HCT116 (cell line): ENCODE measurements at regions of chr16 and their contacts with region 1.

Region 1: DNA sequence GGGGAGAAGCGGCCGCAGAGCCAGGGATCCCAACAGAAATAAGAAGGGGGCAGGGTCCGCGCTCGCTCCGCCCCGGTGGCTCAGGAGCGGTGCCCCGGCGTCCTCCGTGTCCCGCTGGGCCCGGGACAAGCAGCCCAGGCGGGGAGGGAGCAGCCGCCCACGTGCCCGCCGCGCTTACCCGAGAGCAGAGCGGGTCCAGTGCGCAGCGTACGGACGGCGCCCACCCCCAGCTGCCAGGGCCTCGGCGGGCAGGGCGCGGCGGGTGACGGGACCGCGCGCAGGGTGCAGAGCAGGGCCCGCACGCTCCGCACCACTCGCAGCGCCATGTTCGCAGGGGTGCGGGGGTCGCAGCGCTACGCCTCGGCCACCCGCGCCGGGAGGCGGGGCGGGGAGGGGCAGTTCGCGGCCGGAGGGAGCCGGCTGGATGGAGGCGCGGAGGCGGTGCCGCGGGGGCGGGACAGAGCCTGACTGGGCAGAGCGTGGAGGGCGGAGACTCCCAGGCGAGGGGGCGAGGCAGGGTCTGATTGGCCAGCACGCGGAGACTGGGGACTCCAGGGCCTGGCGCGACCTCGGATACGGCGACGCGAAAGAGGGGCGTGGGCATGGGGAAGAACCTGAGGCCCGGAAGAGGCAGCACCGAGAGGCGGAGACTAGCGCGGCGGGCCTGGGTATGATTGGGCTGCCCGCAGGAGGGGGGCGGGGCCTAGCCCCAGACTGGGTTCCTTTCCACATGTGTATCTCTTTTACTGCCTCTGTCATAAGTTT is at the start of gene GCSH:
- DNase-seq: peak; percentile 99
- ATAC-seq: peak; percentile 98
- H3K4me3 ChIP-seq: peak within 1 kb of the TSS; percentile 89 to 95
- H3K27ac ChIP-seq: peak within 1 kb of the TSS; percentile 70
- H3K4me1 ChIP-seq: peaks cover 0 to 30% of the 10 kb centered on the region in 2 experiments; a peak in 3 of 4 replicates
- H3K27me3 ChIP-seq: no peaks in the 10 kb centered on the region
- CTCF ChIP-seq: no peak
- POLR2A ChIP-seq: peak; percentile 45
- RAD21 ChIP-seq: no peak
- total RNA-seq, gene GCSH: 117 TPM

Region 2: DNA sequence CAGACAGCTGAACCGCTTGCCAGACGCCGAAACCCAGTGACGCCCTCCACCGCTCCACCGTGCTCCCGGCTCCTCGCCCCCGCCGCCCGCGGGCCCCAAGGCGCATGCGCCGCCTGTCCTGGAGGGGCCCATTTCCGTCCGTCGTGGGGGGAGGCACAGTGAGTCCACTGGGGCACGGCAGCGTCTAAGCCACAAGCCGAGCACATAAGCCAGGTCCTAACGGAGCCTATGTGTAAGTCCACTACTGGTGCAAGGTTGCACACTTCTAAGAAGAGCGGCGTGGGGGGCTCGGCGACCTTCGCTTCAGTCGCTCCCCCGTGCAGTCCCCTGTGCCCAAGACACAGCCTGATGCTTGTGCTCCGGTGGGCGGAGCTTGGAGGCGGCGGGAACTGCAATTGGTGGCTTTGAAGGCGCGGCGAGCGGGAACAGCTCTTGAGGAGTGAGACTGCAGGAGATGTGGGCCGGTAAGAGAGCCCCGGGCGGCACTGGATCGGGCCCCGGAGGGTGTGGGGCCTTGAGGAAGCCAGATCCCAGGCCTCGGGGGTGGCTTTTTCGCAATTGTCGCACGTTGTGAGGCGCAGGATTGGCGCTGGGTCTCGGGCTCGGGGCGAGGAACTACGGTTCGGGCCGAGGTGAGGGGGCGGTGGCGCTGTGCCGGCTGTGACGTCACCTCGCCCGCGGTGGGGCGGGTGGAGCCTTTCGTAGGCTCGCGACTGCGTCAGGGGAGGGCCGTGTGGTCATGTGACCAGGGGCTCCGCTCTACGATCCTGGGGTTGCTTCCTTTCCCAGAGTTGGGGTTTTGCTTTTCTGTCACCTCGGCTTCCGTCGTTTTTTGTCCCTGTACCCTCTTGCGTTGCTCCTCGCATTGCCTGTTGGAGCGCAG is 89.1 kb before region 1 on chr16 and contains the starts of genes CENPN and CMC2:
- CTCF ChIA-PET with region 1: no interaction called
- POLR2A ChIA-PET with region 1: no interaction called
- RAD21 ChIA-PET with region 1: no interaction called
- intact Hi-C with region 1: loop called (anchors 1 kb)
- DNase-seq: peak; percentile 100
- ATAC-seq: peak; percentile 89
- H3K4me3 ChIP-seq: peak within 1 kb of the TSS; percentile 53 to 93
- H3K27ac ChIP-seq: peak within 1 kb of the TSS; percentile 97
- H3K4me1 ChIP-seq: peaks cover 16 to 26% of the 10 kb centered on the region in 2 experiments
- H3K27me3 ChIP-seq: no peaks in the 10 kb centered on the region
- CTCF ChIP-seq: no peak
- POLR2A ChIP-seq: peak; percentile 92
- RAD21 ChIP-seq: no peak
- total RNA-seq, gene CENPN: 76.7 TPM
- total RNA-seq, gene CMC2: 119 TPM

Region 3: DNA sequence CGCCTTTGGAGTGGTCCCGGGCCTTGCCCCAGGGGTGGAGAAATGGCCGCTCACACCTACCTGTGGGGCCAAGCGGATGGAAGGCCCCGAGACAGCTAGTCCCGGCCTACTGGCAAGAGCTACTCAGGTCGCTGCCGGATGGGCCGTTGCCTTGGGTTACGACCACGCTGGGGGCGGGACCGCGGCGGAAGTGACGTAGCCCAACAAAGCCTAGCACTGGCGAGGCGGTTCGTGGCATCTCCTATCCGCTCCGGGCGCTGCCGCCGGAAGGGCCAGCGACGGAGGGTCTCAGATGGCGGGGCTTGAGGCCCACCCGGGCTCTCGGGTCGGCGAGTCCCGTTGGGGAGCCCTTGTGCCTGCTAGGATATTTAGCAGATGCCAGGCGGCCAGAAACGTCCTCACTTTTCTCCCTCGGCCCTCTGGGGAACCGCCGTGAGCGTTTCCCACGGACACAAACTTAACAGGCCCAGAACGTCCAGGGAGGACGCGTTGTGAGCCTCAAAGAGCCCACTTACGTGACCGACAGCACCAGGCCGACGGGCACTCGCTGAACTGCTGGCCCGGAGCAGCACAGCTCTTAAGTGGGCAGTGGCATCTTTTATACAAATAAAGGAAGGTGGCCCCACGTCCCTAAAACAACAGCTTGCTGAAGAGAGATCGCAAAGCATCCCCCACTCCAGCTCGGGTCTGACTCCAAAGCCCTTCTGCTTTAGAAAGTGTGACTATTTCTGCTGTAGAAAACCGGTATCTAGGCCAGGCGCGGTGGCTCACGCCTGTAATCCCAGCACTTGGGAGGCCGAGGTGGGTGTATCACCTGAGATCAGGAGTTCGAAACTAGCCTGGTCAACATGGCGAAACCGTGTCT is 18.8 kb before region 1 on chr16 and contains the start of gene C16orf46:
- CTCF ChIA-PET with region 1: interaction called, 3 read pairs
- POLR2A ChIA-PET with region 1: no interaction called
- RAD21 ChIA-PET with region 1: no interaction called
- intact Hi-C with region 1: loop called (anchors 2 kb)
- DNase-seq: peak; percentile 96
- ATAC-seq: peak; percentile 92
- H3K4me3 ChIP-seq: peak within 1 kb of the TSS; percentile 66 to 74
- H3K27ac ChIP-seq: peak within 1 kb of the TSS; percentile 53
- H3K4me1 ChIP-seq: peaks cover 10 to 15% of the 10 kb centered on the region in 2 experiments
- H3K27me3 ChIP-seq: no peaks in the 10 kb centered on the region
- CTCF ChIP-seq: no peak
- POLR2A ChIP-seq: peak; percentile 80
- RAD21 ChIP-seq: no peak
- total RNA-seq, gene C16orf46: 1.7 TPM

Region 4: GRCh38 chr16:81204798-81205680 is 108.9 kb after region 1 on chr16:
- CTCF ChIA-PET with region 1: no interaction called
- POLR2A ChIA-PET with region 1: no interaction called
- RAD21 ChIA-PET with region 1: no interaction called
- intact Hi-C with region 1: no loop called
- DNase-seq: peak; percentile 59
- ATAC-seq: peak; percentile 82
- H3K4me3 ChIP-seq: no peak overlapping the region
- H3K27ac ChIP-seq: no peak overlapping the region
- H3K4me1 ChIP-seq: peaks cover 0 to 5% of the 10 kb centered on the region in 2 experiments; a peak in 1 of 4 replicates
- H3K27me3 ChIP-seq: peaks cover 4% of the 10 kb centered on the region; the same call in 1 of the 2 replicates
- CTCF ChIP-seq: peak; percentile 61 to 91 (median 78)
- POLR2A ChIP-seq: no peak
- RAD21 ChIP-seq: peak; percentile 59

Region 5: GRCh38 chr16:81314603-81315270 is 218.6 kb after region 1 on chr16 and contains the start of gene GAN:
- CTCF ChIA-PET with region 1: no interaction called
- POLR2A ChIA-PET with region 1: no interaction called
- RAD21 ChIA-PET with region 1: no interaction called
- intact Hi-C with region 1: loop called (anchors 5 kb)
- DNase-seq: peak; percentile 94
- ATAC-seq: peak; percentile 93
- H3K4me3 ChIP-seq: peak within 1 kb of the TSS; percentile 69 to 92
- H3K27ac ChIP-seq: peak within 1 kb of the TSS; percentile 78
- H3K4me1 ChIP-seq: peaks cover 18 to 35% of the 10 kb centered on the region in 2 experiments
- H3K27me3 ChIP-seq: no peaks in the 10 kb centered on the region
- CTCF ChIP-seq: no peak
- POLR2A ChIP-seq: peak; percentile 97
- RAD21 ChIP-seq: no peak
- total RNA-seq, gene GAN: 22.5 TPM